ENCODE measurements at regions of chr6 and their contacts with region 1.

Region 1: DNA sequence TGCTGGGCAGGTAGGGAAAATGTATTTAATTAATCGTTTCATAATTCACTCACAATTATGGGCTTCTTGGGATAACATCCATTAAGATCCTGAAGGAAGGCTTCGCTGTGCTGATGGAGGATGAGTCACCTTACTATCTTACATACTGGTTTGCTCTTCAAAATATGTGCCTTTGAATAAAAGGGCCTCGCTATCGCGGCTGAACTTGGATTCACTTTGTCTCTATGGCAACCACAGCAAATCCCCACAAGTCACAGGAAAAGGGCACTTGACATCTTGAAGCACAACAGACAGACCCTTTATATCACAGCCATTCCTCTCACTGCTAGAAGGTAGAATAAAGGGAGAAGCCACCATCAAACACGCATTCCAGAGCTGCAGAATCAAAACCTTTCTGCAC is 141.3 kb upstream of the MYLIP start:
- DNase-seq: no peak
- ATAC-seq: no peak
- H3K4me3 ChIP-seq: no peak overlapping the region
- H3K27ac ChIP-seq: no peak overlapping the region
- H3K4me1 ChIP-seq: peaks cover 17% of the 10 kb centered on the region
- H3K27me3 ChIP-seq: no peaks in the 10 kb centered on the region
- CTCF ChIP-seq: no peak
- EP300 ChIP-seq: no peak
- POLR2A ChIP-seq: no peak
- RAD21 ChIP-seq: no peak

Region 2: GRCh38 chr6:15744818-15745402 is 242.7 kb before region 1 on chr6:
- CTCF ChIA-PET with region 1: no interaction called
- POLR2A ChIA-PET with region 1: no interaction called
- RAD21 ChIA-PET with region 1: no interaction called
- SMC1A ChIA-PET with region 1: no interaction called
- in situ Hi-C with region 1: no loop called
- intact Hi-C with region 1: no loop called
- DNase-seq: no peak
- ATAC-seq: no peak; the same call in 2 of the 3 replicates
- H3K4me3 ChIP-seq: no peak overlapping the region
- H3K27ac ChIP-seq: no peak overlapping the region
- H3K4me1 ChIP-seq: no peaks in the 10 kb centered on the region
- H3K27me3 ChIP-seq: no peaks in the 10 kb centered on the region
- CTCF ChIP-seq: no peak
- EP300 ChIP-seq: no peak
- POLR2A ChIP-seq: no peak
- RAD21 ChIP-seq: no peak

Region 3: GRCh38 chr6:15955944-15956735 is 31.4 kb before region 1 on chr6:
- CTCF ChIA-PET with region 1: interaction called, 6 read pairs
- POLR2A ChIA-PET with region 1: interaction called, 13 read pairs
- RAD21 ChIA-PET with region 1: interaction called, 18 read pairs
- SMC1A ChIA-PET with region 1: interaction called, 16 read pairs
- in situ Hi-C with region 1: no loop called
- intact Hi-C with region 1: no loop called
- DNase-seq: no peak
- ATAC-seq: no peak
- H3K4me3 ChIP-seq: no peak overlapping the region
- H3K27ac ChIP-seq: no peak overlapping the region
- H3K4me1 ChIP-seq: peaks cover 28% of the 10 kb centered on the region
- H3K27me3 ChIP-seq: no peaks in the 10 kb centered on the region
- CTCF ChIP-seq: no peak
- EP300 ChIP-seq: no peak
- POLR2A ChIP-seq: no peak
- RAD21 ChIP-seq: no peak

Region 4: GRCh38 chr6:15977050-15977449 is 10.5 kb before region 1 on chr6:
- CTCF ChIA-PET with region 1: interaction called, 5 read pairs
- POLR2A ChIA-PET with region 1: interaction called, 3 read pairs
- RAD21 ChIA-PET with region 1: interaction called, 5 read pairs
- SMC1A ChIA-PET with region 1: interaction called, 10 read pairs
- in situ Hi-C with region 1: no loop called
- intact Hi-C with region 1: no loop called
- DNase-seq: no peak
- ATAC-seq: no peak
- H3K4me3 ChIP-seq: no peak overlapping the region
- H3K27ac ChIP-seq: no peak overlapping the region
- H3K4me1 ChIP-seq: no peaks in the 10 kb centered on the region
- H3K27me3 ChIP-seq: no peaks in the 10 kb centered on the region
- CTCF ChIP-seq: no peak
- EP300 ChIP-seq: no peak
- POLR2A ChIP-seq: no peak
- RAD21 ChIP-seq: no peak

Region 5: DNA sequence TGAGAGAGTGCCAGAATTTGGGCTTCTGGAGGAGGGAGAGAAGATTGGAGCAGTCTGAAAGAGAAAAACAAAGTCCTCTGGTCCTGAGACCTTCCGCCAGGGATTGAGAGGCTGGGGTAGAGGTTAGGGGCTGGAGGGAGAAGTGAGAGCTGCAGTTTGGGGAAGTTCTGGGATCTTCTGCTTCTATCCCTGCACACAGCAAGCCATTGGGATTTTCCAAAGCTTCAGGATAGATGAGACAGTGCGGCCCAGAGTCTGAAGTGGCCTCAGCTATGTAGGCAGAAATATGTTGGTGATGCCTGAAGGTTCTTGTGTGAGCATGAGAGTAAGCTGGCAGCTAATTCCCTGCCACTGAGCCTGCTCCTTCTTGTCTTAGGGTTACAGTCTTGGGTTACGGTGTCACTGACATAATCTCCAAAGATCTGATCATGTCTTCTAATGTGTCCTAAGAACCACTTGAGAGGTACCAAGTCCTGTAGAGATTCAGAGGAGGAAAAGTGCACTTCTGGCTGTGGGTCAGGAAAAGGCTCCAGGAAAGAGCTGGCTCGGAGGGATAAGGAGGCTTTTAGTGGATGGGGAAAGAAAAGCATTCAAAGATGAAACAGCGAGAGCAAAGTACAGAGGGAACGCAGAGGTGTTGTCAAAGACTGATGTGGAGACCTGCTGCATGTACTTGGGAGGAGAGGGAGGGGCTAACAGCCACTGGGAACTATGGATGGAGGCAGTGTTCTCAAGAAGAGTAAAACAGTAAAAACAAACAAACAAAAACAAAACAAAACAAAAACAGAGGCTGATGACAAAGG is 10.2 kb after region 1 on chr6:
- CTCF ChIA-PET with region 1: interaction called, 4 read pairs
- POLR2A ChIA-PET with region 1: interaction called, 4 read pairs
- RAD21 ChIA-PET with region 1: interaction called, 4 read pairs
- SMC1A ChIA-PET with region 1: interaction called, 10 read pairs
- in situ Hi-C with region 1: no loop called
- intact Hi-C with region 1: no loop called
- DNase-seq: no peak
- ATAC-seq: no peak
- H3K4me3 ChIP-seq: no peak overlapping the region
- H3K27ac ChIP-seq: no peak overlapping the region
- H3K4me1 ChIP-seq: no peaks in the 10 kb centered on the region
- H3K27me3 ChIP-seq: no peaks in the 10 kb centered on the region
- CTCF ChIP-seq: no peak
- EP300 ChIP-seq: no peak
- POLR2A ChIP-seq: no peak
- RAD21 ChIP-seq: no peak

Region 6: DNA sequence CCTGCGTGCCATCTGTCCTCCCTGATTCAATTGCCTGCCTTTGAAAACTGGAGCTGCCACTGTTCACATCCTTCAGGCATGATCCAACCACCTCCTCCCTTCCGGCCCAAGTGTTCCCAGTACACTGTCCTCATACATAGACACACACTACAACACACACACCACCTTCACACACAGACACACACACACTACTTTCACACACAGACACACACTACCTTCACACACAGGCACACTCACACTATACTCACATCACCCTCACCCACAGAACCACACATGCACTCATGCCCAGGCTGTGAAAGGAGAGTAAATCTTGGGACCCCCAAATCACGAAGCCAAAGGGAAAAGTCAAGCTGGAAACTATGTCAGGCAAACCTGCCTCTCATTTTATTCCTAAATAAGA is 31.9 kb after region 1 on chr6:
- CTCF ChIA-PET with region 1: no interaction called
- POLR2A ChIA-PET with region 1: no interaction called
- RAD21 ChIA-PET with region 1: no interaction called
- SMC1A ChIA-PET with region 1: no interaction called
- in situ Hi-C with region 1: no loop called
- intact Hi-C with region 1: no loop called
- DNase-seq: no peak
- ATAC-seq: no peak
- H3K4me3 ChIP-seq: no peak overlapping the region
- H3K27ac ChIP-seq: no peak overlapping the region
- H3K4me1 ChIP-seq: no peaks in the 10 kb centered on the region
- H3K27me3 ChIP-seq: no peaks in the 10 kb centered on the region
- CTCF ChIP-seq: no peak
- EP300 ChIP-seq: no peak
- POLR2A ChIP-seq: no peak
- RAD21 ChIP-seq: no peak

Region 7: GRCh38 chr6:16043171-16044135 is 55.9 kb after region 1 on chr6:
- CTCF ChIA-PET with region 1: no interaction called
- POLR2A ChIA-PET with region 1: no interaction called
- RAD21 ChIA-PET with region 1: interaction called, 15 read pairs
- SMC1A ChIA-PET with region 1: interaction called, 5 read pairs
- in situ Hi-C with region 1: no loop called
- intact Hi-C with region 1: no loop called
- DNase-seq: peak; percentile 62
- ATAC-seq: peak; percentile 91
- H3K4me3 ChIP-seq: no peak overlapping the region
- H3K27ac ChIP-seq: peak overlapping the region; percentile 59
- H3K4me1 ChIP-seq: peaks cover 29% of the 10 kb centered on the region
- H3K27me3 ChIP-seq: no peaks in the 10 kb centered on the region
- CTCF ChIP-seq: no peak
- EP300 ChIP-seq: peak; percentile 27 to 58; a peak in 2 of 4 replicates
- POLR2A ChIP-seq: no peak
- RAD21 ChIP-seq: no peak

Region 8: GRCh38 chr6:16092140-16092539 is 104.6 kb after region 1 on chr6:
- CTCF ChIA-PET with region 1: interaction called, 4 read pairs
- POLR2A ChIA-PET with region 1: no interaction called
- RAD21 ChIA-PET with region 1: interaction called, 12 read pairs
- SMC1A ChIA-PET with region 1: interaction called, 6 read pairs
- in situ Hi-C with region 1: no loop called
- intact Hi-C with region 1: no loop called
- DNase-seq: no peak
- ATAC-seq: no peak
- H3K4me3 ChIP-seq: no peak overlapping the region
- H3K27ac ChIP-seq: no peak overlapping the region
- H3K4me1 ChIP-seq: no peaks in the 10 kb centered on the region
- H3K27me3 ChIP-seq: no peaks in the 10 kb centered on the region
- CTCF ChIP-seq: no peak
- EP300 ChIP-seq: no peak
- POLR2A ChIP-seq: no peak
- RAD21 ChIP-seq: no peak

Measured in GM12878 (cell line).